Activated B cell treated with CpG ODN at 0.5 μM for 24 hours (primary cell): ENCODE measurements at regions of chr17 and their contacts with region 1.

Region 1: DNA sequence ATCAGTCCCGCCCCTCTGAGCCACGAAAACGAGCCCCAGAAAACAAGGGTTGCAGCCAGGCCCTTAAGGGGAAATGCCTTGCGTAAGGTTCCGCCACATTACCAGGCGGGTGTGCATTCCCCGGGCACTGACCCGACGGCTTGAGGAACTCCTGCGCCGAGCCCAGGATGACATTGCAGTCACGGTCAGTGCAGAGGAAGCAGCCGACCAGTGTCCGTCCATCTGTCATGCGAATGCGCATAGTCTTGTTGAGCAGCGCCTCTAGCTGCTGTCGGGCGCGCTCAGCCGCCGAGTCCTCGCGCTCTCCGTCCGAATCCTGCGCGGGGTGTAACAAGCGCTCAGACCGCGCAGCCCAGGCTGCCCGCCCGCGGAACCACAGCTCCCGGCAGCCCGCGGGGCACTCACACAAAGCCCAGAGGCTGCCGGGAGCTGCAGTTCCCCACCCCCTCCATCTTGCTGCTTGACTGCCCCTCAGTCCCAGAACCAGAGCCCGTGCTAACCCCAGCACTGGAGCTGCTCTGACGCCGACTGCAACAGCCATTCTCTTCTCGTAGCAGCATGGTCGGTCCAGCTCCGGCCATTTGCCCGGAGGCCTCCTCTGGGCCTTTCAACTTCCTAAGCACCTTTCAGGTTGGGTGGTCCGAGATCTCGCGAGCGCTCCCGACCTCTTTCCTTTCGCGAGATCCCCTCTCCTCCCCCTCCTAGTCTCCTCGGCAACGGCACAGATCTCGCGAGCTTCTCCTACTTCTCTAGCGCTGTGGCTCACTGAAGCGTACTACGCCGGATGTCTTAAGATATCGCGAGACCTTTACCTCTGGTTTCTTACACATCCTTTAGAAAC is at the start of gene NAA38:
- DNase-seq: peak; percentile 88
- ATAC-seq: peak; percentile 83
- H3K4me3 Mint-ChIP-seq: no peak within 1 kb of the TSS
- H3K27ac Mint-ChIP-seq: no peak within 1 kb of the TSS
- H3K4me1 Mint-ChIP-seq: peaks cover 5% of the 10 kb centered on the region
- H3K27me3 Mint-ChIP-seq: no peaks in the 10 kb centered on the region
- CTCF ChIP-seq: no peak
- total RNA-seq, gene NAA38: 36.0 and 47.9 TPM in 2 replicates

Region 2: DNA sequence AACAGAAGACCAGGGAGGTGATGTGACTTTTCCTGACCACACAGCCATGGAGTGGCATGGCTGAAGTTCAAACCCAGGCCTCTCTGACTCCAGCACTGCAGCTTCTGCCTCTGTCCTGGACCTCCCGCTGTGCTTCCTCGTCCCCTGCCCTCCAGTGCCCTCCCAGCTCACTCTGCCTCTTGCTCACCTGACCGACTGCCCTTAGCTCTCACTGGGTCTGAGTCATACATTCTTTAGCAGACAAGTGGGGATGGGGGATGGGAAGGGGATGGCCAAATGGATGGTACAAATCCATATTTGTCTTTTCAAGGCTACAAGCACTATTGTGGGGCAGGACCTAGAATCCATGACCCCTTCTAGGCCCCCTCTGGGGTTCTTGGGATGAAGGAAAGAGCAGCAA is 1333.8 kb before region 1 on chr17:
- CTCF ChIA-PET with region 1: no interaction called
- POLR2A ChIA-PET with region 1: no interaction called
- intact Hi-C with region 1: no loop called
- DNase-seq: no peak
- ATAC-seq: no peak
- H3K4me3 Mint-ChIP-seq: no peak overlapping the region
- H3K27ac Mint-ChIP-seq: no peak overlapping the region
- H3K4me1 Mint-ChIP-seq: no peaks in the 10 kb centered on the region
- H3K27me3 Mint-ChIP-seq: no peaks in the 10 kb centered on the region
- CTCF ChIP-seq: no peak

Region 3: DNA sequence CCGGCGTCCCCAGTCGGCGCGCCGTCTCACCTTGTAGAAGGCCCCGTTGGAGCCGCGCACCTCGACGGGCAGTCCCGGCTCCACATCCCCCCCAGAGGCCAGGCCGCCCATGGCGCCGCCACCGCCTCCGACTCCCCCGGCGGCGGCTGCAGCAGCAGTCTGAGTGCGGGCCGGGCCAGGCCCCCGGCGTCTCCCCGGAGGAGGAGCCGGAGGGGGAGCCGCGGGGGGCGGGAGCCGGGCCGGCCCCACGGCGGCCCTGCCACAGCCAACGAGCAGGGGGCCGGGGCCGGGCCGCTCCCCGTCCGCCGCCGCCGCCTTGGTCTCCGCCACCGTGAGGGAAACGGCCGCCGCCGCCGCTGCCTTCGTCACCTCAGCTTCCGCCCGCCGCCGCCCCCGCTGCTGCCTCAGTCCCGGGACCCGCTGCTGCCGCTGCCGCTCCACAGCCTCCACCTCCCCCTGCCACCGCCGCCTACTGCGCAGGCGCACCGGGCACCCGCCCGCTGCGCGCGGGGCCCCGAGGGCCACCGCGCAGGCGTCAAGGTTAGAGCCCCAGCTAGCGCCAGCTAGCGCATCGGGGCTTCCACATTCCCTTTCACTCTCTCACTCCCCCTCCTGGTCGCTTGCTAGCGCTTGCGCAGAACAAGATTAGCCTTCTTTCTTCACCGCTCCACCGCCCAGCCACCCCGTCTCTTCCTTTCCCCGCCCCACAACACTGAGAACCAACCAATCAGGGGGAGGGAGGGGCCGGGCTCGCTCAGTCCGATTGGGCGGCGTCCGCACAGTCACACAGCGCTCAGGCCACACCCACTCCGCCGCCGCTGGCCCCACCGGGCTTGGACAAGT is 242.5 kb before region 1 on chr17 and contains the start of gene FXR2:
- CTCF ChIA-PET with region 1: no interaction called
- POLR2A ChIA-PET with region 1: no interaction called
- intact Hi-C with region 1: loop called (anchors 2 kb)
- DNase-seq: peak; percentile 97
- ATAC-seq: peak; percentile 93
- H3K4me3 Mint-ChIP-seq: peak within 1 kb of the TSS; percentile 87
- H3K27ac Mint-ChIP-seq: peak within 1 kb of the TSS; percentile 93
- H3K4me1 Mint-ChIP-seq: peaks cover 37% of the 10 kb centered on the region
- H3K27me3 Mint-ChIP-seq: no peaks in the 10 kb centered on the region
- CTCF ChIP-seq: no peak
- total RNA-seq, gene FXR2: 27.5 and 32.4 TPM in 2 replicates

Region 4: DNA sequence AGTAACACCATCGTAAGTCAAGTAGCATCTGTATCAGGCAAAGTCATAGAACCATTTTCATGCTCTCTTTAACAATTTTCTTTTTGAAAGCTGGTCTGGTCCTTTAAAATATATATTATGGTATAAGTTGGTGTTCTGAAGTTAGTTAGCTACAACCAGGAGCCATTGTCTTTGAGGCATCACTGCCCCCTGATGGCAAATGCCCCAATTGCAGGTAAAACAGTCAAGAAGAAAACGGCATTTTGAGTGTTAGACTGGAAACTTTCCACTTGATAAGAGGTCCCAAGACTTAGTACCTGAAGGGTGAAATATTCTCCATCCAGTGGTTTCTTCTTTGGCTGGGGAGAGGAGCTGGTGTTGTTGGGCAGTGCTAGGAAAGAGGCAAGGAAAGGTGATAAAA is 183.9 kb before region 1 on chr17:
- CTCF ChIA-PET with region 1: no interaction called
- POLR2A ChIA-PET with region 1: no interaction called
- intact Hi-C with region 1: no loop called
- DNase-seq: no peak
- ATAC-seq: no peak
- H3K4me3 Mint-ChIP-seq: no peak overlapping the region
- H3K27ac Mint-ChIP-seq: no peak overlapping the region
- H3K4me1 Mint-ChIP-seq: peaks cover 7% of the 10 kb centered on the region
- H3K27me3 Mint-ChIP-seq: no peaks in the 10 kb centered on the region
- CTCF ChIP-seq: no peak

Region 5: GRCh38 chr17:7825206-7825990 is 31.7 kb before region 1 on chr17:
- CTCF ChIA-PET with region 1: interaction called, 3 read pairs
- POLR2A ChIA-PET with region 1: interaction called, 5 read pairs
- intact Hi-C with region 1: loop called (anchors 1 kb)
- DNase-seq: no peak
- ATAC-seq: no peak
- H3K4me3 Mint-ChIP-seq: no peak overlapping the region
- H3K27ac Mint-ChIP-seq: no peak overlapping the region
- H3K4me1 Mint-ChIP-seq: no peaks in the 10 kb centered on the region
- H3K27me3 Mint-ChIP-seq: peaks cover 18% of the 10 kb centered on the region
- CTCF ChIP-seq: no peak

Region 6: DNA sequence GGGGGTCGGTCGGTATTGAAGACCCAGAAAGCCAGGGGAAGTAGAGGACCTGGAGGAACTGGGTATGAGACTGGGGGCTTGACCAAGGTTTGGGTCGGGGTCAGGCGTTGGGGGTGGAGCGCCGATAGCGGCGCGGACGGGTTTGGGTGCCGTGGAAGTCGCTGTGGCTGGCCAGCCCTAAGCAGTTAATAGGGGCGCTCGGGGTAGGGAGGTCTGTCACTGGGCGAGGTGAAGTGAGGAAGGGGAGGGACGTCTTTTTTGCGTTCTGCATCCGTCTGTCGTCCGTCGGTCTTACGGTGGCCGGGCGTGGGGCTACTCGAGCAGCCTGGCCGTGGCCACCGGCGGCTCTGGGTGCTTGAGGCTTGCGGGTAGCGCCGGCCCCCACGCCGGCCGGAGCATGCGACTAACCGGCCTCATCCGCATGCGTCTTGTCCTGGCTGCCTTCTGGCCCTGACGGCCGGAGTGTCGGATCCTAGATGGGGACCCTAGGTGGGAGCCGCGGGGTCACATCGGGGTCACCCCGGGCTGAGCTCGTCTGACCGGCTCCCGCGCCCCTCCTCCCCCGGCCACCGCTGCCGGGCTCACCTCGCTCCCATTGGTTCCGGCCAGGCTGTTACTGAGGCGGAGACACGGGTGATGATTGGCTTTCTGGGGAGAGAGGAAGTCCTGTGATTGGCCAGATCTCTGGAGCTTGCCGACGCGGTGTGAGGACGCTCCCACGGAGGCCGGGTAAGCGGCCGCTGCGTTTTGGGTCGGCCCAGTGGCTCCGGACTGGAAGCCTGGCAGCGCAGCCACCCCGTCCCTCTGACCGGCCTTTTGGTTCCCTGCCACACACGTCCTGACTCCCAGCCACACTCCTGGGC is 12.6 kb before region 1 on chr17:
- CTCF ChIA-PET with region 1: interaction called, 3 read pairs
- POLR2A ChIA-PET with region 1: interaction called, 98 read pairs
- intact Hi-C with region 1: loop called (anchors 1 kb)
- DNase-seq: peak; percentile 83
- ATAC-seq: peak; percentile 46
- H3K4me3 Mint-ChIP-seq: peak overlapping the region; percentile 98
- H3K27ac Mint-ChIP-seq: peak overlapping the region; percentile 100
- H3K4me1 Mint-ChIP-seq: peaks cover 50% of the 10 kb centered on the region
- H3K27me3 Mint-ChIP-seq: no peaks in the 10 kb centered on the region
- CTCF ChIP-seq: no peak

Region 7: DNA sequence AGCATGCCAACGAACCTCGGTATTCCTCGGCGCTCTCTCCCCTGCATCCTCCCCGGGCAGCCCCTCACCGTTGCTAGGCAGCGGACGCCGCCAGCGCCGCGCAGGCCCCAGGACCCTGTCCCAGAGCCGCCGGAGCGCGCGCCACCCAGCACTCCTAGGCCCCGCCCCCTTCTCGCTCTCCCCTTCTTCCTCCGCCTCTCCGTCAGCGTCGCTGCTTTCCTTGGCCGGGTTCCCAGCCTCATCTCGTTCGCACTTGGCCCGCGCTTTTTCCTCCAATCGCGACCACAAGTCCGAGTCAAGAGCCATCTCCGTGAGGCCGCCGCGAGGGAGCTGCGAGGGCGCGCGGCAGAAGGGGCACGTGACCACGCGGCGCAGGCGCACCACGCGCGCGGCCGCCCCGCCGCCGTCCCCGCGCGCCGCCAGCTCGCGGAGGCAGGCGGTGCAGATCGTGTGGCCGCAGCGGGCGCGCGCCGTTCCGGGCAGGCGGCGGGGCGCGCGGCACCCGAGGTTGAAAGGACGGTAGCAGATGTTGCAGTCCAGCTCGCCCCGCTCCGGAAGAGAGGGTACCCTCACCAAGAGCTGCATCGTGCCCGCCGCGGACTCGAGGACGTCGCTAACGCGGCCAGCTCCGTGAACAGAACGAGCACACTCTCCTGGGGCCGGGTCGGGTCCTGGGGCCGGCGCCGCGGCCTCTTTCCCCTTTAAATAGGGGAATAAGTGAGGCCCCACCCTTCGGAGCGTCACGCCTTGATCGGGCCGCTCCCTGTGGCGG is 58.7 kb after region 1 on chr17 and contains the start of gene RNF227:
- CTCF ChIA-PET with region 1: interaction called, 18 read pairs
- POLR2A ChIA-PET with region 1: interaction called, 12 read pairs
- intact Hi-C with region 1: loop called (anchors 1 kb)
- DNase-seq: peak; percentile 81
- ATAC-seq: peak; percentile 83
- H3K4me3 Mint-ChIP-seq: peak within 1 kb of the TSS; percentile 91
- H3K27ac Mint-ChIP-seq: peak within 1 kb of the TSS; percentile 87
- H3K4me1 Mint-ChIP-seq: peaks cover 23% of the 10 kb centered on the region
- H3K27me3 Mint-ChIP-seq: no peaks in the 10 kb centered on the region
- CTCF ChIP-seq: no peak
- total RNA-seq, gene RNF227: 2.5 and 2.8 TPM in 2 replicates

Region 8: GRCh38 chr17:7989781-7990655 is 132.9 kb after region 1 on chr17:
- CTCF ChIA-PET with region 1: interaction called, 77 read pairs
- POLR2A ChIA-PET with region 1: interaction called, 15 read pairs
- intact Hi-C with region 1: loop called (anchors 1 kb)
- DNase-seq: peak; percentile 96
- ATAC-seq: peak; percentile 94
- H3K4me3 Mint-ChIP-seq: peak overlapping the region; percentile 77
- H3K27ac Mint-ChIP-seq: peak overlapping the region; percentile 75
- H3K4me1 Mint-ChIP-seq: peaks cover 17% of the 10 kb centered on the region
- H3K27me3 Mint-ChIP-seq: peaks cover 9% of the 10 kb centered on the region
- CTCF ChIP-seq: no peak

Region 9: DNA sequence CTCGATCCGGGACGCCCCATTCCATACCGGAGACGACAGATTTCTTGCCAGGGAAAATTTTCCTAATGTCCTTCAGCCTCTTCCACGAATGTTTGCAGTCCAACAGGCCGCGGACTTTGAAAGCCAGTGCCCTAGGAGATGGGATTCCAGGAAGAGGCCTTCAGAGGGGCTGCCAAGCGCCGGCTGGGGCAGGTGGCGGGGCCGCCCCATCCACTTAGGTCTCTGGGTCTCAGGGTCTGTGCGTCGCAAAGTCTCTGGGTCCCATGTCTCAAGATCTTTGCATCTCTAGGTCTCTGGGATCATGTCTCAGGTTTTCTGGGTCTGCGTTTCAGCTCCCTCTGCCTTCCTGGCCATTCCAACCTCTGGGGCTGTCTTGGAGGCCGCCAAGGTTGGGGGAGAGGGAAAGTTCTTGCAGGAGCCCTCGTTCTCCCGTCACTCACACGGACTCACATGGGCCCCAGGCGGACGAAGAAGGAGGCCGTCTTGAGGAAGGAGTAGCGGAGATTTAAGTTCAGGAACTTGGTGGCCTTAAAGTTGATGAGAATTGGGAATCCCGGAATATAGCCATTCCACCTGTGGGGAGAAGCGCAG is 223.2 kb after region 1 on chr17:
- CTCF ChIA-PET with region 1: no interaction called
- POLR2A ChIA-PET with region 1: no interaction called
- intact Hi-C with region 1: no loop called
- DNase-seq: no peak
- ATAC-seq: no peak
- H3K4me3 Mint-ChIP-seq: peak overlapping the region; percentile 89
- H3K27ac Mint-ChIP-seq: peak overlapping the region; percentile 83
- H3K4me1 Mint-ChIP-seq: peaks cover 14% of the 10 kb centered on the region
- H3K27me3 Mint-ChIP-seq: peaks cover 6% of the 10 kb centered on the region
- CTCF ChIP-seq: no peak

Region 10: DNA sequence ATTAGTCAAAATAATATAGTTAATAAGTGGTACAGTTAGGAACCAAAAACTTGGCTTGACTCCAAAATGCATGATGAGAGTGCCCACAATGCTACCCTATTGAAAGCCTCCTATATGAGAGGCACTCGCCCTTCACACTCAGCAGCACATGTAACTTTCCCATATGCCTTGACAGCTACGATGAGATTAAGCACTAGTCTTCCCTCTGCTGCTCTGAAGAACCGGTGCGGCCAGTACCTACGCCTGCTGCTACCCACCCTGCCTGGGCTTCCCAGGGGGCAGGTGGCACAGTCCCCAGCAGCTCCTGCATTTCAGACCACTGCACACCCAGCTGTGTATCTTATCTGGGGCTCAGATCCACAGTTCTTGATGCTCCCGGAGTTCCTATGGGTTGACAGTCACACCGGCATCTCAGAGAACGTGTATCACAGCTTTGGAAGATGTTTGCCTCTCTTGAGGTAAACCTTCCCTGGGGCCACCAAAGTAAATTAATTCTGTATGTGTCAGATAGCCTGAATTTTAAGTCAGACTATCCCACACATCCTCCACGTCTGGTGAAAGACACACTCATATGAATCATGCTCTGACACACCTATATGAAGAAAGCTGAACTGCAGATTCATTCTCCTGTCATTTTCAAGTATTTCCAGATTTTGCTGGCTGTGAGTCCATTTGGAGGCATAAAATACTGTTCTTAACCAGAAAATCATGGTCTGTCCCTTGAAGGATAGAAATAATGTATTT is 695.6 kb after region 1 on chr17:
- CTCF ChIA-PET with region 1: no interaction called
- POLR2A ChIA-PET with region 1: no interaction called
- intact Hi-C with region 1: no loop called
- DNase-seq: no peak
- ATAC-seq: no peak
- H3K4me3 Mint-ChIP-seq: no peak overlapping the region
- H3K27ac Mint-ChIP-seq: no peak overlapping the region
- H3K4me1 Mint-ChIP-seq: no peaks in the 10 kb centered on the region
- H3K27me3 Mint-ChIP-seq: no peaks in the 10 kb centered on the region
- CTCF ChIP-seq: no peak